Caco-2 (cell line): ENCODE measurements at regions of chr3 and their contacts with region 1.

Region 1: GRCh38 chr3:156816800-156817645 is 9.1 kb upstream of the LEKR1 start:
- DNase-seq: peak; percentile 94 to 96
- H3K4me3 ChIP-seq: peak overlapping the region; percentile 84
- H3K4me3 Mint-ChIP-seq: peak overlapping the region; percentile 90
- H3K27ac Mint-ChIP-seq: peak overlapping the region; percentile 91
- H3K4me1 ChIP-seq: peaks cover 43% of the 10 kb centered on the region
- H3K4me1 Mint-ChIP-seq: peaks cover 14% of the 10 kb centered on the region
- H3K27me3 ChIP-seq: no peaks in the 10 kb centered on the region
- H3K27me3 Mint-ChIP-seq: no peaks in the 10 kb centered on the region
- CTCF ChIP-seq: no peak

Region 2: DNA sequence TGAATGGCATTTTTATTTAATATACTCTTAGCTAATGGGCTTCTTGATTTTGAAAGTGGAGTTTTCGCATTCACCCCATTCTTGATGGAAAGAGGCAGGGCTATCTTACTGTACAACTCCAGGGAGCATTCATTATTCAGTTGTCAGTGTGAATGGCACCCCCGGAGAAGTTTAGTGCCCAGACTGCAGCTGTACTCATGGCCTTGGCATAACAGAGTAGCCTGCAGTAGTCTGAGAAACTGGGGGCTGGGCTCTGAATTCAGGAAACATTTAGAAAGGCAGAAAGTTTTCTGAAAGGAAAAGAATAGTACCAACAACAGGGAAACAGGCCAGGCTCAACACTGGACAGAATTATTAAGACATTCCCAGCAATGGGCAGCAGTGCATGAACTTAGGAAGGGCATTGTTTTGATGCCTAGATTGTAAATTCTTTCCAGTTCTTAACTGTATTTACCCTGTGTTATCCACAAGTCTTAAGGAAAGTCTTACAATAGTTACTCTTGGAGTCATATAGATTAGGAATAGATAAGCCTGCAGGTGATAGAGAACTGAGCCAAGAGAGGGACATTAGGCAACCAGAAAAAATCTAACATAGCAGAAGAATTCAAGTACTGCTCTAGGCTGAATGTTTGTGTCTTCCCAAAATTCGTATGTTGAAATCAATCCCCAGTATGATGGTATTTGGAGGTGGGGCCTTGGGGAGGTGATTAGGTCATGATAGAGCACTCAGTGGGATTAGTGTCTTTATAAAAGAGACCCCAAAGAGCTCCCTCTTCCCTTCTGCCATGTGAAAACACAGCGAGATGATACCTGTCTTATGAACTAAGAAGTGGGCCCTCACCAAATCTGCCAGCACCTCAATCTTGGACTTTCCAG is 98.2 kb before region 1 on chr3:
- CTCF ChIA-PET with region 1: no interaction called
- POLR2A ChIA-PET with region 1: no interaction called
- intact Hi-C with region 1: loop called (anchors 2 kb)
- DNase-seq: peak in 1 of 2 experiments; percentile 35
- H3K4me3 ChIP-seq: no peak overlapping the region
- H3K4me3 Mint-ChIP-seq: no peak overlapping the region
- H3K27ac Mint-ChIP-seq: peak overlapping the region; percentile 36
- H3K4me1 ChIP-seq: peaks cover 20% of the 10 kb centered on the region
- H3K4me1 Mint-ChIP-seq: peaks cover 26% of the 10 kb centered on the region
- H3K27me3 ChIP-seq: no peaks in the 10 kb centered on the region
- H3K27me3 Mint-ChIP-seq: no peaks in the 10 kb centered on the region
- CTCF ChIP-seq: no peak

Region 3: DNA sequence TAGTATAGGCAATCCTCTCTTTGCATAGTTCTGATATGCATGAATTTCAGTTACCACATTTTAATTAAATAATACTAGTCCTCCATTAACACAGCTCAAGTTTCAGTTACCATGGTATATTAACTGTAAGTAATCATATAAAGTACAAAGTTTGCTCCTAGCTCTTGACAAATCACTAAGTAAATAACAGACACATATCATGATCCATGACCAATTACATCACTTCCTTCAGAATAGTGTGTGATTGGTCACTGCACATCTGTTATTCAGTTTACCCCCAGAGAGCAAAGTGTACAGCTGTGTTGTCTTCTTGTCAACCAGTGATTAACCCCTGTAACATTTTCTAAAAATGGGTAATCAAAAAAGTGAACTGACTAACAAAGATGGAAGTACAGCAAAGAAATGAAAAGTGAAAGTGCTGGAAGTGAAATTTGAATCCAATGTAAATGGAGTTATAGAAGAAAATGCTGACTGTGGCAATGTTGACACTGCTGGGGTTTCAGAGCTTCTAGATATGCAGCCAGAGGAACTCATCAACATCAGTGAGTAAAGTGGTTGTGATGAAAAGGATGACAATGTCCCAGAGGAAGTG is 21.0 kb before region 1 on chr3:
- CTCF ChIA-PET with region 1: no interaction called
- POLR2A ChIA-PET with region 1: no interaction called
- intact Hi-C with region 1: no loop called
- DNase-seq: no peak
- H3K4me3 ChIP-seq: no peak overlapping the region
- H3K4me3 Mint-ChIP-seq: no peak overlapping the region
- H3K27ac Mint-ChIP-seq: no peak overlapping the region
- H3K4me1 ChIP-seq: peaks cover 13% of the 10 kb centered on the region; the same call in 1 of the 2 replicates
- H3K4me1 Mint-ChIP-seq: peaks cover 13% of the 10 kb centered on the region
- H3K27me3 ChIP-seq: no peaks in the 10 kb centered on the region
- H3K27me3 Mint-ChIP-seq: no peaks in the 10 kb centered on the region
- CTCF ChIP-seq: no peak